HCT116 (cell line): ENCODE measurements at regions of chrX and their contacts with region 1.

Region 1: GRCh38 chrX:154748712-154749343 is 2.0 kb downstream of the GAB3 start:
- DNase-seq: no peak
- ATAC-seq: peak; percentile 84
- H3K4me3 ChIP-seq: no peak overlapping the region
- H3K27ac ChIP-seq: no peak overlapping the region
- H3K4me1 ChIP-seq: peaks cover 0 to 3% of the 10 kb centered on the region in 2 experiments; a peak in 1 of 4 replicates
- H3K27me3 ChIP-seq: peaks cover 5% of the 10 kb centered on the region; the same call in 1 of the 2 replicates
- CTCF ChIP-seq: peak; percentile 60 to 62 (median 61)
- POLR2A ChIP-seq: no peak
- RAD21 ChIP-seq: peak; percentile 69

Region 2: GRCh38 chrX:154762523-154763289 is 13.9 kb after region 1 on chrX and contains the start of gene DKC1:
- CTCF ChIA-PET with region 1: interaction called, 17 read pairs
- POLR2A ChIA-PET with region 1: no interaction called
- RAD21 ChIA-PET with region 1: no interaction called
- intact Hi-C with region 1: no loop called
- DNase-seq: peak; percentile 87
- ATAC-seq: peak; percentile 94
- H3K4me3 ChIP-seq: peak within 1 kb of the TSS; percentile 77 to 89
- H3K27ac ChIP-seq: peak within 1 kb of the TSS; percentile 78
- H3K4me1 ChIP-seq: peaks cover 0 to 5% of the 10 kb centered on the region in 2 experiments; a peak in 1 of 4 replicates
- H3K27me3 ChIP-seq: no peaks in the 10 kb centered on the region
- CTCF ChIP-seq: no peak
- POLR2A ChIP-seq: no peak
- RAD21 ChIP-seq: no peak
- total RNA-seq, gene DKC1: 123 TPM